IMR-90 (cell line): ENCODE measurements at regions of chr2 and their contacts with region 1.

Region 1: GRCh38 chr2:232772531-232772930 is 3.8 kb downstream of the KCNJ13 start:
- DNase-seq: no peak
- ATAC-seq: no peak
- H3K4me3 ChIP-seq: no peak overlapping the region
- H3K27ac ChIP-seq: no peak overlapping the region
- H3K4me1 ChIP-seq: no peaks in the 10 kb centered on the region
- H3K27me3 ChIP-seq: no peaks in the 10 kb centered on the region
- CTCF ChIP-seq: no peak
- POLR2A ChIP-seq: no peak
- RAD21 ChIP-seq: no peak

Region 2: DNA sequence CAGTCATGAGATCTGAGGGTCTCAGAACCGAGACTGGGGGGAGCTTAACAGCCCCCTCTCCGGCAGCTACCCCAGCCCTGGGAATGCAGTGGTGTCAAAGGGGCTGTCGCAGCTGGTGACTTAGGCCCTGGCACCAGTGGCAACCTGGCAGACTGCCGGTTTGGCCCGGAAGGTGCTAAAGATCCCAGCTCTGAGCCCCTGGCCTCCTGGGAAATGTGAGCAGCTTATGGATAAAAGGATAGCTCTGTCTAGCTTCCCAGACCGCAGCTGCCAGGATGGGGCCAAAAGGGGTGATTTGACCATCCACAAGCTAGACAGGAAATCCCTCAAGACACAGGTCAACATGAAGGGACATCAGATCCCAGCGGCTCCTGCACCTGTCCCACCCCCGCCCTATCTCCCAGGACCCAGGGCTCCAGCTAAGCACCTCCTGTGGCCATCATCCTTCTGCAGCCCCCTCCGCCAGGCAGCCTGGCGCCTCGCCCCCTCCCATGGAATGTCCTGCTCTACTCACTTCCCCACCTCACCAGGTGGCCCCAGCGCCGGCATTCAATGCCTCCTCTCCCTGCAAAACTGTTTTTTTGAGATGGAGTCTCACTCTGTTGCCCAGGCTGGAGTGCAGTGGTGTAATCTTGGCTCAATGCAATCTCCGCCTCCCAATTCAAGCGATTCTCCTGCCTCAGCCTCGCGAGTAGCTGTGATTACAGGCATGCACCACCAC is 172.3 kb before region 1 on chr2:
- CTCF ChIA-PET with region 1: no interaction called
- POLR2A ChIA-PET with region 1: no interaction called
- dilution Hi-C with region 1: no loop called
- in situ Hi-C with region 1: no loop called
- intact Hi-C with region 1: loop called (anchors 10 kb)
- DNase-seq: no peak
- ATAC-seq: no peak
- H3K4me3 ChIP-seq: no peak overlapping the region
- H3K27ac ChIP-seq: no peak overlapping the region
- H3K4me1 ChIP-seq: no peaks in the 10 kb centered on the region
- H3K27me3 ChIP-seq: peaks cover 10% of the 10 kb centered on the region
- CTCF ChIP-seq: no peak
- POLR2A ChIP-seq: no peak
- RAD21 ChIP-seq: no peak